ENCODE measurements at regions of chr15 and their contacts with region 1.

Region 1: DNA sequence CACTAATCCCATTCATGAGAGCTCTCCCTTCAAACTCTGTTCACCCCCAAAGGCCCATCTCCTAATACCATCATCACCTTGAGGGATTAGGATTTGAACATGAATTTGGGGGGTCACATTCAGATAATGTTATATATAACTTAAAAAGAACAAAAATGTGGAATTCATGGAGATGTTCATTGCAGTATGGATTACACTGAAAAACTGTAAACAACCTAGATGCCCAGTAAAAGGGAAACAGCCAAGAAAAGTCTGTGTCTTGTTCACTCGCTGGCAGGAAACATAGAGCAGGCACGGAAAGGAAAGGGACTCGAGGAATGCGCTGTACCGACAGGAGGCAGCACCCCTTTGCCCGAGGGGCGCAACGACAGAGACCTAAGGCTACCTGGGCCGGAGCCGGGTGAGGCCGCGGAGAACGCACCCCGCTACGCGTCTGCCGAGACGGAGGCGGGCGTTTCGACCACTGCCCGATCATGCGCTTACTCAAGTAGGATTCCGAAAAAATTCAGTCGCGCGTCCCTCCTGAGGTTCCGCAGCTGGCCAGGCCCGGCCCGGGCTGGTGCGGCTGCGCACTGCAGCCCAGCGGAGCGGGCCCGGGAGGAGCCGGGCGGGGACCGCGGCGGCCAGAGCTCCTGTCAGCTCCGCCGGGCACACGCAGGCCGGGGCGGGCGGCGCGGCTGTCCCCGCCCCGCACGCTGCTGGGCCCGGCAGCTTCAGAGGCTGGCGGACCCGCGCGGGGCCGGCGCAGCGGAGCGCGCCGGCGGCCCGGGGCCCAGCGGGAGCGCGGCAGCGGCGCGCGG is 862 bp upstream of the MAN2A2 start:
- DNase-seq: peak; percentile 93
- H3K4me3 Mint-ChIP-seq: peak overlapping the region; percentile 87
- H3K27ac Mint-ChIP-seq: peak overlapping the region; percentile 70
- H3K4me1 Mint-ChIP-seq: peaks cover 26% of the 10 kb centered on the region
- H3K27me3 Mint-ChIP-seq: no peaks in the 10 kb centered on the region

Region 2: GRCh38 chr15:90789462-90789861 is 112.8 kb before region 1 on chr15:
- intact Hi-C with region 1: no loop called
- DNase-seq: no peak
- H3K4me3 Mint-ChIP-seq: no peak overlapping the region
- H3K27ac Mint-ChIP-seq: no peak overlapping the region
- H3K4me1 Mint-ChIP-seq: peaks cover 21% of the 10 kb centered on the region
- H3K27me3 Mint-ChIP-seq: no peaks in the 10 kb centered on the region

Region 3: GRCh38 chr15:90924375-90924774 is 22.1 kb after region 1 on chr15:
- intact Hi-C with region 1: loop called (anchors 1 kb)
- DNase-seq: no peak
- H3K4me3 Mint-ChIP-seq: no peak overlapping the region
- H3K27ac Mint-ChIP-seq: peak overlapping the region; percentile 77
- H3K4me1 Mint-ChIP-seq: peaks cover 35% of the 10 kb centered on the region
- H3K27me3 Mint-ChIP-seq: no peaks in the 10 kb centered on the region